AG04450 (cell line): ENCODE measurements at regions of chr1 and their contacts with region 1.

Region 1: GRCh38 chr1:203381151-203381751 is 30.3 kb upstream of the FMOD start:
- DNase-seq: no peak
- H3K4me3 ChIP-seq: no peak overlapping the region
- H3K27ac ChIP-seq: no peak overlapping the region
- H3K27me3 ChIP-seq: peaks cover 45% of the 10 kb centered on the region
- CTCF ChIP-seq: no peak

Region 2: DNA sequence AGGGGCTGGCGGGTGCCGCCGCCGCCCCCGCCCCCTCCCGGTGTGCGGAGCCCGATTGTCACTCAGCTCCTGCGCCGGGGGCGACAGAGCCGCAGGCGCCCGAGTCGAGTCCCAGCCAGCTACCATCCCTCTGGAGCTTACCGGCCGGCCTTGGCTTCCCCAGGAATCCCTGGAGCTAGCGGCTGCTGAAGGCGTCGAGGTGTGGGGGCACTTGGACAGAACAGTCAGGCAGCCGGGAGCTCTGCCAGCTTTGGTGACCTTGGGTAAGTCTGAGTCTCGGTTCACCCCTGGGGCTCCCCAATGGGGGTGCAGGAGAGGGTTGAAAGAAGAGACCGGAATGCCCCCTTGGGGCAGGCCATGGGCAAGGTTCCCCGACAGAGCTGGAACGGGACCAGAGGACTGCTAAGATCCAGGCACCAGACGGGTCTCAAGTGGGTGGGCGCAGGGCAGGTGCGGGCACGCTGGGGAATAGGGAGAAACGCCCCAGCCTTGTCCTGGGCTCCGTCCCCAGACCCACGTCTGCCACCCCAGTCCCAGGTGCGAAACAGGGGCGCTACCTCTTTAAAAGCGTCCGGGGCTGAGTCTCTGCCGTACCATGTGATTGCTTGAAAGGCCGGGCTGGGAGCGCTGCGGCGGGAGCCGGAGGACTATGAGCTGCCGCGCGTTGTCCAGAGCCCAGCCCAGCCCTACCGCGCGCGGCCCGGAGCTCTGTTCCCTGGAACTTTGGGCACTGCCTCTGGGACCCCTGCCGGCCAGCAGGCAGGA is 253.4 kb before region 1 on chr1 and contains the start of gene ADORA1:
- CTCF ChIA-PET with region 1: no interaction called
- POLR2A ChIA-PET with region 1: no interaction called
- DNase-seq: no peak
- H3K4me3 ChIP-seq: peak within 1 kb of the TSS; percentile 55
- H3K27ac ChIP-seq: no peak within 1 kb of the TSS
- H3K27me3 ChIP-seq: peaks cover 57% of the 10 kb centered on the region
- CTCF ChIP-seq: 0 out of 2 replicates have a peak, but pooled peaks have one; percentile 3
- polyA plus RNA-seq, gene ADORA1: 1.7 and 2.1 TPM in 2 replicates

Region 3: GRCh38 chr1:203424861-203425662 is 43.8 kb after region 1 on chr1:
- CTCF ChIA-PET with region 1: no interaction called
- POLR2A ChIA-PET with region 1: interaction called, 13 read pairs
- DNase-seq: peak; percentile 47
- H3K4me3 ChIP-seq: no peak overlapping the region
- H3K27ac ChIP-seq: peak overlapping the region; percentile 54
- H3K27me3 ChIP-seq: peaks cover 52% of the 10 kb centered on the region
- CTCF ChIP-seq: no peak

Region 4: DNA sequence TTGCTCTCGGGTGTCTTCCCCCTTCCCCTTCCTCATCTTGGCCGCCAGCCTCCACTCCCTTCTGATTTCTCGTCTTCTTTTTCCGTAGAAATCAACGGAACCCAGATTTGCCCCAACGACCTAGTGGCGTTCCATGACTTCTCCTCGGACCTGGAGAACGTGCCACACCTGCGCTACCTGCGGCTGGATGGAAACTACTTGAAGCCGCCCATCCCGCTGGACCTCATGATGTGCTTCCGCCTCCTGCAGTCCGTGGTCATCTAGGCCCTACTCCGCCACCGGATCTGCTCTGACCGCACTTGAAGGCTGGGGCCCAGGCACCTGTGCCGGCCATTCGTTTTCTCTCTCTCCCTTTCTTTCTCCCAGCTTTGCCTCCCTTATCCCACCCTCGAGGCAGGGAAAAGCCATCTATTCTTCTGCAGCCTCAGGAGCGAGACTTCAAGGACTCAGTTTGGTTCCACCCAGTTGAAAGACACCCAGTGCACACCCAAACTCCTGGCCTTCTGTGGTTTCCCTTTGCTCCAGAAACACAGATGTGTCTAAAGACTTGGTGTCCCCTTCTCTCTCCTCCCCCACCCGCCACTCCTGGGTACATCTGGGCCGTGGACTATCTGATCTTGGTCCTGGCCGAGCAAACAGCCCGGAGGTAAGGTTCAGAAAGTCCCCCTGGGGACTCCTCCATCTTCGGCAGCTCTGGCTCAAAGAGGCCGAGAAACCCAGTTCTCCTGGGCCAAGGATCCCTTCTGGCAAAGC is 105.5 kb after region 1 on chr1:
- CTCF ChIA-PET with region 1: interaction called, 11 read pairs
- POLR2A ChIA-PET with region 1: no interaction called
- DNase-seq: no peak
- H3K4me3 ChIP-seq: no peak overlapping the region
- H3K27ac ChIP-seq: peak overlapping the region; percentile 67
- H3K27me3 ChIP-seq: peaks cover 3% of the 10 kb centered on the region
- CTCF ChIP-seq: no peak